K562 (cell line): ENCODE measurements at regions of chr6 and their contacts with region 1.

Region 1: GRCh38 chr6:15264902-15265761 is 19.3 kb downstream of the JARID2 start:
- DNase-seq: peak; percentile 51 to 63 (median 56)
- ATAC-seq: peak; percentile 31
- H3K4me3 ChIP-seq: no peak overlapping the region
- H3K27ac ChIP-seq: peak overlapping the region; percentile 56; the same call in 1 of the 3 replicates
- H3K4me1 ChIP-seq: peaks cover 39 to 70% of the 10 kb centered on the region in 2 experiments
- H3K27me3 ChIP-seq: no peaks in the 10 kb centered on the region
- CTCF ChIP-seq: no peak
- EP300 ChIP-seq: no peak
- POLR2A ChIP-seq: no peak
- RAD21 ChIP-seq: 0 out of 4 replicates have a peak, but pooled peaks of 1 of the 2 experiments have one; percentile 4

Region 2: DNA sequence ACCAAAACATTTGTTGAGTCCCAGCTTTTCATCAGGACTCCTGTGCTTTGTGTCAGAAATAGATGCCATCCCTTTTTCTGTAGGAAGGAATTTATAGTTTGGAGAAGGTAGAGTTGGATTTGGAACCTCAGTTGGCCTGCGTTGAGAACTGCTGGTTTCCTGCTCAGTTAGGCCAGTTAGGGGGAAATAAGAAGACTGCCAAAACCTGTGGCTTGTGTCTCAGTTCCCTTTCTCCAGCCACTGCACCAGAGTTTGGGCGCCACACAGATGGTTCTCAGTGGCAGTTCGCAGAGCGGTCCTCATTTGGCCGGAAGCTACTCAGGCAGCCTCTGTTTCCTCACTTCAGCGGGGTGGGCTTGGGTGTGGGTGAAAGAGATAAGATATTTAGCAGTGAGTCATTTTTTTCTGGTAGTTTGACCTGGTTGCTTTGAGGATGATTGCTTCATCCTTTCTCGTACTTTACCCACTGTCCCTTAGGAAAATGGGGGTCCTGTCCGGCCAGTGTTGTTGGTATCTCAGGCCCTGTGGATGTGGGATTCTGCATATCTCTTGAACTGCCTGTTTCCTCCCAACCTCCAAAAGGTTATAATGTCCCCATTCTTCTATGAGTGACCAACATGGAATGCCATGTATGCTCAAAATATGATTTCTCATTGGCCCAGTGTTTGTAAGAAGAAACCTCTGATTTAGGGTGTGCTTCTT is 34.4 kb after region 1 on chr6:
- CTCF ChIA-PET with region 1: no interaction called
- POLR2A ChIA-PET with region 1: interaction called, 4 read pairs
- in situ Hi-C with region 1: no loop called
- intact Hi-C with region 1: loop called (anchors 1 kb)
- DNase-seq: peak; percentile 91 to 98 (median 94)
- ATAC-seq: peak; percentile 86
- H3K4me3 ChIP-seq: peak overlapping the region; percentile 0; the same call in 1 of the 2 replicates
- H3K27ac ChIP-seq: peak overlapping the region; percentile 89
- H3K4me1 ChIP-seq: peaks cover 37 to 77% of the 10 kb centered on the region in 2 experiments
- H3K27me3 ChIP-seq: no peaks in the 10 kb centered on the region
- CTCF ChIP-seq: peak in 1 of 3 experiments; percentile 18; a peak in 1 of 6 replicates
- EP300 ChIP-seq: peak; percentile 98
- POLR2A ChIP-seq: peak; percentile 69
- RAD21 ChIP-seq: peak in 1 of 2 experiments; percentile 35; a peak in 2 of 4 replicates